Naive thymus-derived CD4-positive, alpha-beta T cell (primary cell): ENCODE measurements at regions of chr5 and their contacts with region 1.

Region 1: DNA sequence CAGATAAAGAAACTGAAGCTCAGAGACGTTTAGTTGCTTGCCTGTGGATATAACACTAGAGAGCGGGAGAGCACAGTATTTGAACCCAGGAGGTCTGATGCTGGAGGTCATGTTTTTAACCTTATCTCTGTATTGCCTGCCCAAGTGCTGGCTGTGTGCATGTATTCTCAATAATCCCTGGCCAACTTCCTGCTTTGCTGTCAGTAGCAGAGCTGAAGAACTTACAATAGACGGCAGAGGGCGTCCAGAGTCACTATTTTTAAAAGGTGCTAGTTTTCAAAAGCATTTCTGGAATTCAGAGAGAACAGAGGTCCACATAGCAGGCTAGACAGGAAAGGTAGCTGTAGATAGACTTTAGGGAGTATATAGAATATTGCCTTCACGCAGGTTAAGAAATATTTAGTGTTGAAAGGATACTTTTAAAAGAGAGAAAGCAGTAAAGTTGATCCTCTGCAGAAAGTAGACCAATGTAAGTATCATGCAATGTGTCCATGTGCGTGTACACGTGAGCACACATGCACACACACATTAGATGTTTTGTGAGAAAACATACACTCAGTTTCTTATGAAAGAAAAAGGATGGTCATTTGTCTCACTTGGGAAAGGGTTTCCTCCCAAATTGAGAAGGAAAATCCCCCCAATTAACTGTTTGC is 46.3 kb downstream of the PTCD2 start:
- DNase-seq: peak in 6 of 9 donors; percentile 2 to 32 (median 12)
- ATAC-seq: peak; percentile 74
- H3K4me3 ChIP-seq: no peak overlapping the region
- H3K4me3 Mint-ChIP-seq: no peak overlapping the region
- H3K27ac ChIP-seq: no peak overlapping the region
- H3K27ac Mint-ChIP-seq: peak overlapping the region in 1 of 9 donors; percentile 8
- H3K4me1 ChIP-seq: no peaks in the 10 kb centered on the region
- H3K4me1 Mint-ChIP-seq: peaks cover 0 to 7% (median 0%) of the 10 kb centered on the region in 7 donors
- H3K27me3 ChIP-seq: no peaks in the 10 kb centered on the region
- H3K27me3 Mint-ChIP-seq: no peaks in the 10 kb centered on the region

Region 2: DNA sequence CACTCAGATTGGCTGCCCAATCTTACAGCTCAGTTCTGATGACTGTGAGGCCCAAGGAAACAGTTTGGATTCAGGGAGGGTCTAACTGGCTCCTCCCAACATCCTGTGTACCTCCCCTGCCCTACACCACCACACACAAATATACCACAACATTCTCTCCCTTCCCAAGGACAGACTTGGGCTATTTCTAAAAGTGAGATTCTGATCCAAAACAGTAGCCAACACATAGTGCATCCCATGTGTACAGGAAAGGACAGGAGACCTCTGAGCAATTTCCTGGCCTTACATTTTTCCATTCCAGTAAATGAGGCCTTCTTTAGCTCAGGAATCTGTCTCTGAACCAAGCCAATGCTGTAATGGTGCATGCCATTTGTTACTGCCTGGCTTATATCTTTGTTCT is 119.9 kb after region 1 on chr5:
- CTCF ChIA-PET with region 1: no interaction called
- POLR2A ChIA-PET with region 1: no interaction called
- intact Hi-C with region 1: no loop called
- DNase-seq: no peak
- ATAC-seq: no peak
- H3K4me3 ChIP-seq: no peak overlapping the region
- H3K4me3 Mint-ChIP-seq: no peak overlapping the region
- H3K27ac ChIP-seq: no peak overlapping the region
- H3K27ac Mint-ChIP-seq: no peak overlapping the region
- H3K4me1 ChIP-seq: no peaks in the 10 kb centered on the region
- H3K4me1 Mint-ChIP-seq: peaks cover 0 to 2% (median 0%) of the 10 kb centered on the region in 7 donors
- H3K27me3 ChIP-seq: no peaks in the 10 kb centered on the region
- H3K27me3 Mint-ChIP-seq: peaks cover 0 to 17% (median 13%) of the 10 kb centered on the region in 5 donors

Region 3: DNA sequence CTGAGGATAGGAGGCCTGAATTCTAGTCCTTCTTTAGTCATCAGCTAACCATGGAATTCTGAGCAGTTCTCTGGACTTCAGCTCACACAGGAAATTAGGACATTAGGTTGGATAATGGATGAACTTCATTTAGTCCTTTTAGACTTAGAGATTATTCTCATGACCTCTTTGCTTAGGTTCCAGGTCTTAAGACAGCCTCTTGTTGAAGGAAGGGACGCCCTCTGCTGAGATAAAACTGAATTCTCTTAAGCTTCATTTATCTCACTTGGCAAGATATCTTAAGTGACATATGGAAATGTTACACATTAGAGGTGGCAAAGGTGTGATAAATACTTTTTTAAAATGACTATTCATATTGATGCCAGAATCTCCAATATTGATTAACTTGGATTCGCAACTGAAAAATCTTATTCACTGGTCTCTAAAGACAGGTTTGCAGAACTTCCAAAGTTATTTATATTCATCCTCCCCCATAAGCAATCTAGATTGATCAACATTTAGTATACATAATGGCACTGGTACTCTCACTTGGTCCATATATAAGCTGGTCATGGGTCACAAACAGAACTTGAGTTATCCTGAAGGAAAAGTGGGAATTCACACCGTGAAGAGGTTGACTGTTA is 157.6 kb after region 1 on chr5:
- CTCF ChIA-PET with region 1: no interaction called
- POLR2A ChIA-PET with region 1: no interaction called
- intact Hi-C with region 1: loop called in 1 of 2 experiments (anchors 10 kb)
- DNase-seq: no peak
- ATAC-seq: peak; percentile 37
- H3K4me3 ChIP-seq: no peak overlapping the region
- H3K4me3 Mint-ChIP-seq: no peak overlapping the region
- H3K27ac ChIP-seq: no peak overlapping the region
- H3K27ac Mint-ChIP-seq: no peak overlapping the region
- H3K4me1 ChIP-seq: no peaks in the 10 kb centered on the region
- H3K4me1 Mint-ChIP-seq: no peaks in the 10 kb centered on the region
- H3K27me3 ChIP-seq: no peaks in the 10 kb centered on the region
- H3K27me3 Mint-ChIP-seq: peaks cover 0 to 14% (median 7%) of the 10 kb centered on the region in 5 donors